ENCODE measurements at regions of chr13 and their contacts with region 1.

Region 1: DNA sequence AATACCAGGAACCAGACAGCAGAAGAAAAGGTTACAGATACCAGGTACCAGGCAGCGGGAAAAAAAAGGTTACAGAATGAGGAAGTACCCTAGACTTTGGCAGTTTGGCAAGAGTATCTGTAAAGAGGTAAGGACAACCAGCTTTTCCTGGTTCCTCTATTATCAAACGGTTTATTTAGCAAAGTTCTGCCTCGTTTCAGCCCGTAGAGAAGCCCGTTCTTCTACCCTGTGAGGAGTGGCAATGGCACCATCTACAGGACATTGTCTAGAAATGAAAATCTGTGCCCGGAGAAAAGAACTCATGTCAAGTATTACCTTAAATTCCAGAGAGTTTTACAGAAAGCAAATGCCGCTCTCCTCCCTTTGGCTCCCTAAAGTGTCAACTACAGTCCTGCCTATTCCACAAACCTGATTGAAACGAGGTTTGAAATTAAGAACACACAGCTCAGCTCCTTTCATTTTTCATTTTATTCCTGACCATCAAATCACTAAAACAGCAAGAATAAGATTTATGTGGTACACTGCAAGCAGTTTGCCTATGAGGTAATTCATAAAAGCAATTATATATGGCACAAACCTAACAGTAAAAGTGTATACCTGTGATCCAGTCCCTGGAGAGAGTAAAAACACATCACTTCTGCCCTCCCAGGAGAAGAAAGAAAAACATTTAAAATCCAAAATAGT is 226.3 kb downstream of the SLC7A1 start:
- DNase-seq: no peak
- CTCF ChIP-seq: no peak

Region 2: DNA sequence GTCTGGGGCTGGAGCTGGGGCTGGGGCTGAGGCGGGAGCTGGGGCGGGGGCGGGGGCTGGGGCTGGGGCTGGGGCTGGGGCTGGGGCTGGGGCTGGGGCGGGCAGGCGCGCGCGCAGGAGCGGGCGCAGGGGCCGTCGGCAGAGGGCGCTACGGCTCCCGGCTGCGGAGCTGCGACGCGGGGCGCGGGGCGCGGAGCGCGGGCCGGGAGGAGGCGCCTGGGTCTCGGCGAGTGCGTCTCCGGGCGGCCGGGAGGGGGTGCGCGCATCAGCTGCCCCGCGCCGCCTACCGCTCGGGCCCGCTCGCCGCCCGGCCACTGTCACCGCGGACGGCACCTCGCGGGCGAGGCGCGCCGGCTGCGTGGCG is 549.5 kb before region 1 on chr13:
- in situ Hi-C with region 1: loop called (anchors 5 kb)
- DNase-seq: peak; percentile 85
- CTCF ChIP-seq: peak; percentile 66

Region 3: DNA sequence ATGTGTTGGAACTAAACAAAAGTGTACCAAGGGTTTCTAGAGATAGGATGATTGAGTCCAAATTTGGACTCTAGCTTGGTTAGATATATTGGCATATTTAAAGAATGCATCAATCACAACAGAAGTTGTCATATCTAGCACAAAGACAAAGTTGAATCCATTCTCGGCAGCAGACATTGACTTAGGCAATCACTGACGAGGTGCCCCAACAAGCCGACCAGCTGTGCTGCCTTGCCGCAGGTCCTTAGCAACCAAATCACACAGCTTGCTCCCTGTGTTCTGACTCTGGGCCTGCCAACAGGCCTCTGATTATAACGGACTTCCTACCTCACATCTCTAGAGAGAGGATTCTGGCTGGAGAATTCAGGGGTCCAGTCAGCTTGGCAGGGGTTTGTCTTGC is 340.3 kb before region 1 on chr13:
- in situ Hi-C with region 1: no loop called
- DNase-seq: no peak
- CTCF ChIP-seq: no peak